ENCODE measurements at regions of chr1 and their contacts with region 1.

Region 1: GRCh38 chr1:112715264-112716053 is at the start of gene PPM1J:
- DNase-seq: peak; percentile 96
- H3K4me3 Mint-ChIP-seq: peak within 1 kb of the TSS; percentile 75
- H3K27ac Mint-ChIP-seq: no peak within 1 kb of the TSS
- H3K4me1 Mint-ChIP-seq: peaks cover 5% of the 10 kb centered on the region
- H3K27me3 Mint-ChIP-seq: no peaks in the 10 kb centered on the region
- CTCF ChIP-seq: no peak
- total RNA-seq, gene PPM1J: 0.88 and 1.5 TPM in 2 replicates

Region 2: GRCh38 chr1:112390775-112391602 is 324.5 kb before region 1 on chr1:
- CTCF ChIA-PET with region 1: interaction called, 17 read pairs
- POLR2A ChIA-PET with region 1: interaction called, 7 read pairs
- intact Hi-C with region 1: no loop called
- DNase-seq: peak; percentile 95
- H3K4me3 Mint-ChIP-seq: peak overlapping the region; percentile 75
- H3K27ac Mint-ChIP-seq: peak overlapping the region; percentile 11
- H3K4me1 Mint-ChIP-seq: peaks cover 33% of the 10 kb centered on the region
- H3K27me3 Mint-ChIP-seq: no peaks in the 10 kb centered on the region
- CTCF ChIP-seq: peak; percentile 75

Region 3: GRCh38 chr1:112735752-112736151 is 20.3 kb after region 1 on chr1:
- CTCF ChIA-PET with region 1: interaction called, 45 read pairs
- POLR2A ChIA-PET with region 1: interaction called, 3 read pairs
- intact Hi-C with region 1: no loop called
- DNase-seq: peak; percentile 64
- H3K4me3 Mint-ChIP-seq: no peak overlapping the region
- H3K27ac Mint-ChIP-seq: peak overlapping the region; percentile 49
- H3K4me1 Mint-ChIP-seq: no peaks in the 10 kb centered on the region
- H3K27me3 Mint-ChIP-seq: no peaks in the 10 kb centered on the region
- CTCF ChIP-seq: no peak

Region 4: DNA sequence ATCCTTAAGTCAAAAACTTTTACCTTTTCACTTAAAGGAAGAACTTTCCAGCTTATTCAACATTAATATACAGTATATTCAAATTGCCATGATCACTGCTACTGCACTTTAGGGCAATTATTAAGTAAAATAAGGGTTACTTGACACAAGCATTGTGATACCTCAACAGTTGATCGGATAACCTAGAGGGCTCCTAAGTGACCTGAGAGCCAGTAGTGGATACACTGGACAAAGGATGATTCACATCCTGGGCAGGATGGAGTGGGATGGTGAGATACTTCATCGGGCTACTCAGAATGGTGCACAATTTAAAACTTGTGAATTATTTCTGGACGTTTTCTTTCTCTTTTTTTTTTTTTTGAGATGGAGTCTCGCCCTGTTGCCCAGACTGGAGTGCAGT is 54.2 kb after region 1 on chr1:
- CTCF ChIA-PET with region 1: interaction called, 44 read pairs
- POLR2A ChIA-PET with region 1: no interaction called
- intact Hi-C with region 1: no loop called
- DNase-seq: no peak
- H3K4me3 Mint-ChIP-seq: no peak overlapping the region
- H3K27ac Mint-ChIP-seq: no peak overlapping the region
- H3K4me1 Mint-ChIP-seq: no peaks in the 10 kb centered on the region
- H3K27me3 Mint-ChIP-seq: no peaks in the 10 kb centered on the region
- CTCF ChIP-seq: no peak

Region 5: GRCh38 chr1:112803906-112804762 is 88.7 kb after region 1 on chr1:
- CTCF ChIA-PET with region 1: interaction called, 838 read pairs
- POLR2A ChIA-PET with region 1: interaction called, 32 read pairs
- intact Hi-C with region 1: loop called (anchors 1 kb)
- DNase-seq: peak; percentile 78
- H3K4me3 Mint-ChIP-seq: no peak overlapping the region
- H3K27ac Mint-ChIP-seq: no peak overlapping the region
- H3K4me1 Mint-ChIP-seq: peaks cover 3% of the 10 kb centered on the region
- H3K27me3 Mint-ChIP-seq: no peaks in the 10 kb centered on the region
- CTCF ChIP-seq: peak; percentile 84

Region 6: GRCh38 chr1:112882271-112882744 is 166.8 kb after region 1 on chr1:
- CTCF ChIA-PET with region 1: interaction called, 27 read pairs
- POLR2A ChIA-PET with region 1: no interaction called
- intact Hi-C with region 1: loop called (anchors 5 kb)
- DNase-seq: no peak
- H3K4me3 Mint-ChIP-seq: no peak overlapping the region
- H3K27ac Mint-ChIP-seq: peak overlapping the region; percentile 43
- H3K4me1 Mint-ChIP-seq: peaks cover 20% of the 10 kb centered on the region
- H3K27me3 Mint-ChIP-seq: no peaks in the 10 kb centered on the region
- CTCF ChIP-seq: no peak

Region 7: GRCh38 chr1:113036639-113037321 is 321.3 kb after region 1 on chr1:
- CTCF ChIA-PET with region 1: interaction called, 41 read pairs
- POLR2A ChIA-PET with region 1: no interaction called
- intact Hi-C with region 1: no loop called
- DNase-seq: peak; percentile 70
- H3K4me3 Mint-ChIP-seq: no peak overlapping the region
- H3K27ac Mint-ChIP-seq: peak overlapping the region; percentile 46
- H3K4me1 Mint-ChIP-seq: peaks cover 7% of the 10 kb centered on the region
- H3K27me3 Mint-ChIP-seq: no peaks in the 10 kb centered on the region
- CTCF ChIP-seq: no peak